GM12878 (cell line): ENCODE measurements at regions of chr11 and their contacts with region 1.

Region 1: GRCh38 chr11:32385998-32386397 is 49.3 kb downstream of the WT1 start:
- DNase-seq: no peak
- ATAC-seq: peak; percentile 43; the same call in 2 of the 3 replicates
- H3K4me3 ChIP-seq: no peak overlapping the region
- H3K27ac ChIP-seq: no peak overlapping the region
- H3K4me1 ChIP-seq: no peaks in the 10 kb centered on the region
- H3K27me3 ChIP-seq: peaks cover 0 to 1% of the 10 kb centered on the region in 2 experiments; a peak in 3 of 4 replicates
- CTCF ChIP-seq: peak in 2 of 3 experiments; percentile 6 to 28; a peak in 2 of 6 replicates
- EP300 ChIP-seq: no peak
- POLR2A ChIP-seq: no peak
- RAD21 ChIP-seq: peak; percentile 21; the same call in 1 of the 2 replicates

Region 2: GRCh38 chr11:32068134-32068870 is 317.7 kb before region 1 on chr11:
- CTCF ChIA-PET with region 1: no interaction called
- POLR2A ChIA-PET with region 1: no interaction called
- RAD21 ChIA-PET with region 1: no interaction called
- SMC1A ChIA-PET with region 1: no interaction called
- in situ Hi-C with region 1: no loop called
- intact Hi-C with region 1: no loop called
- DNase-seq: no peak
- ATAC-seq: no peak
- H3K4me3 ChIP-seq: no peak overlapping the region
- H3K27ac ChIP-seq: no peak overlapping the region
- H3K4me1 ChIP-seq: peaks cover 5% of the 10 kb centered on the region
- H3K27me3 ChIP-seq: no peaks in the 10 kb centered on the region
- CTCF ChIP-seq: no peak
- EP300 ChIP-seq: no peak
- POLR2A ChIP-seq: no peak
- RAD21 ChIP-seq: no peak

Region 3: DNA sequence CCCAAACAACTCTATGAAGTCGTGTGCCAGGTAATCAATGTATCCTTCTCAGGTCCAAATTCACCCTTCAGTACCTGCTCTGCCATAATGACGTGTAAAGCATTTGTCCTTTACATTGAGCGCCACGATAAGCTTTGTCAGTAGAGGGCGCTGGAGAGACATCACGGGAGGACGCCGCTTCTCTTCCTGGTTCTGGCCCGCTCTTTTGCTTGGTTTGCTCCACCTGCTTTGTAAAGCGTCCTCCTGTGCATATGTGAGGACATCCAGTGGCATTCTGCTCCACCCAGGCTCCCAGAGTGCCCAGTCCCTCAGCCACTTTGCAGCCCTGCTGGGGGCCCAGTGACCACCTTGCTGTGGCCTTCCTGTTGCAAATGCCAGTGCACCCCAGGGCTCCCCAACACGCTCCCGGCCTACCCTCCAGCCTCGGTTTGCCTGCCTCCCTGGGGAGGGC is 11.7 kb before region 1 on chr11:
- CTCF ChIA-PET with region 1: interaction called, 4 read pairs
- POLR2A ChIA-PET with region 1: no interaction called
- RAD21 ChIA-PET with region 1: interaction called, 5 read pairs
- SMC1A ChIA-PET with region 1: interaction called, 10 read pairs
- in situ Hi-C with region 1: no loop called
- intact Hi-C with region 1: no loop called
- DNase-seq: peak; percentile 25
- ATAC-seq: peak; percentile 96
- H3K4me3 ChIP-seq: no peak overlapping the region
- H3K27ac ChIP-seq: no peak overlapping the region
- H3K4me1 ChIP-seq: no peaks in the 10 kb centered on the region; the same call in 1 of the 2 replicates
- H3K27me3 ChIP-seq: no peaks in the 10 kb centered on the region
- CTCF ChIP-seq: peak; percentile 57 to 72 (median 65)
- EP300 ChIP-seq: no peak
- POLR2A ChIP-seq: no peak
- RAD21 ChIP-seq: peak; percentile 59

Region 4: DNA sequence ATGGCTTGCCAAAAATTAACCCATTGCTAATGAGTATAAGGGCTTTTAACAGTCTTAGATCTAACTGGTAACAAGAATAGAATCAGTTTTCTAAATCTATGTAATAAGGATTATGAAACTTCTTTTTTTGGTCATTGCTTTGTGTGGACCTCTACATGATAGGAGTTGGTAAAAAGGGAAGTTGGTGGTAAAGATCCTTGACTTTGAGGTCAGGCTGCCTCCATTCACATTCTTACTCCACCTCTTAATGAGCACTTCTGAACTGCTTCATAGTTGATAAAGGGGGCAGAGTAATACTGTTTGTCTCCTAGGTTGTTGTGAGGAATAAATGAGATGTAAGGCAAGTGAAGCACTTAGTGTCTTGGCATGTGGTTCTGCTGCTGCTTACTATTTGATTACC is 208.3 kb after region 1 on chr11:
- CTCF ChIA-PET with region 1: no interaction called
- POLR2A ChIA-PET with region 1: no interaction called
- RAD21 ChIA-PET with region 1: no interaction called
- SMC1A ChIA-PET with region 1: no interaction called
- in situ Hi-C with region 1: no loop called
- intact Hi-C with region 1: no loop called
- DNase-seq: no peak
- ATAC-seq: peak; percentile 80
- H3K4me3 ChIP-seq: no peak overlapping the region
- H3K27ac ChIP-seq: no peak overlapping the region; the same call in 1 of the 2 replicates
- H3K4me1 ChIP-seq: no peaks in the 10 kb centered on the region
- H3K27me3 ChIP-seq: no peaks in the 10 kb centered on the region
- CTCF ChIP-seq: no peak
- EP300 ChIP-seq: no peak
- POLR2A ChIP-seq: no peak
- RAD21 ChIP-seq: no peak

Region 5: DNA sequence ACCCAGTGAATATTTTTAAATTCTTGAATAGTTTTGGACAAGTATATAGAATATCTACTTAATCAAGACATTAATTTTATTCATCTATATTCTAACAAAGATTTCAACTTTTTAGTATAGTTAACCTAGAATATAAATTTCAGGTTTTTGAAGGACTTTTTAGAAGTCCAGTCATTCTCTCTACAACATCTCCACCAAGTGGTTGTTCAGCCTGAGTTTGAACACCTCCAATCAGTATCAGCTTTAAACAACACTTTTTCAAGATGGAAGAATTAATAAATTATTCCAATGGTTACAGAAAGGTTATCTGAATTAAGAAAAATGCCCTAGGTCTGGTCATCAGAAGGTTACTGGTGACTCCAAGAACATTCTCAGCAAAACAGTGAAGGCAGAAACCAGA is 229.4 kb after region 1 on chr11:
- CTCF ChIA-PET with region 1: no interaction called
- POLR2A ChIA-PET with region 1: no interaction called
- RAD21 ChIA-PET with region 1: interaction called, 3 read pairs
- SMC1A ChIA-PET with region 1: no interaction called
- in situ Hi-C with region 1: no loop called
- intact Hi-C with region 1: loop called (anchors 10 kb)
- DNase-seq: no peak
- ATAC-seq: no peak
- H3K4me3 ChIP-seq: no peak overlapping the region
- H3K27ac ChIP-seq: no peak overlapping the region
- H3K4me1 ChIP-seq: no peaks in the 10 kb centered on the region
- H3K27me3 ChIP-seq: no peaks in the 10 kb centered on the region
- CTCF ChIP-seq: peak in 2 of 3 experiments; percentile 7 to 45; a peak in 2 of 6 replicates
- EP300 ChIP-seq: no peak
- POLR2A ChIP-seq: no peak
- RAD21 ChIP-seq: peak; percentile 71